Sciatic nerve (tissue), 2 donors: ENCODE measurements at regions of chr1 and their contacts with region 1.

Region 1: GRCh38 chr1:207811920-207812720 is 60.3 kb downstream of the CD46 start:
- DNase-seq: no peak
- ATAC-seq: peak; percentile 70

Region 2: GRCh38 chr1:207603777-207604176 is 208.3 kb before region 1 on chr1:
- intact Hi-C with region 1: loop called (anchors 5 kb)
- DNase-seq: no peak
- ATAC-seq: no peak